ENCODE measurements at regions of chr22 and their contacts with region 1.

Region 1: DNA sequence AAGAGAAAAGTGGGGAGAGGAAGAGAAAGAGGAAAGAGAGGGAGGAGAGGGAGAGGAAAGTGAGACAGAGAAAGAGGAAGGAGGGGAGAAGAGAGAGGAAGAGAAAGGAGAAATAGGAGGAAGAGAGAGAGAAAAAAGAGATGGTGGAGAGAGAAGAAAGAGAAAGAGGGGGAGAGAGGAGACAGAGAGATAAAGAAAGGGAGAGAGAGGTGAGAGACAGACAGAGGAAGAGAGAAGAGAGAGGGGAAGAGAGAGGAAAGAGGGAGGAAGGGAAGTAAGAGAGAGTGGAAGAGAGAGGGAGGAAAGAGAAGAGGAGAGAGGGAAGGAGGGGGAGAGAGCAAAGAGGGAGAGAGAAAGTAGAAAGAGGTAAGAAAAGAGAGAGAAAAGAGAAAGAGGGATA is 9.4 kb upstream of the SEZ6L start:
- DNase-seq: no peak
- H3K4me3 ChIP-seq: no peak overlapping the region
- H3K27ac ChIP-seq: no peak overlapping the region
- H3K4me1 ChIP-seq: no peaks in the 10 kb centered on the region
- H3K27me3 ChIP-seq: peaks cover 96% of the 10 kb centered on the region
- CTCF ChIP-seq: no peak

Region 2: GRCh38 chr22:26215736-26216135 is 55.9 kb after region 1 on chr22:
- intact Hi-C with region 1: loop called (anchors 10 kb)
- DNase-seq: no peak
- H3K4me3 ChIP-seq: no peak overlapping the region
- H3K27ac ChIP-seq: no peak overlapping the region
- H3K4me1 ChIP-seq: no peaks in the 10 kb centered on the region
- H3K27me3 ChIP-seq: peaks cover 92% of the 10 kb centered on the region
- CTCF ChIP-seq: no peak

Region 3: GRCh38 chr22:26273011-26273675 is 113.3 kb after region 1 on chr22:
- intact Hi-C with region 1: no loop called
- DNase-seq: no peak
- H3K4me3 ChIP-seq: no peak overlapping the region
- H3K27ac ChIP-seq: no peak overlapping the region
- H3K4me1 ChIP-seq: no peaks in the 10 kb centered on the region
- H3K27me3 ChIP-seq: peaks cover 93% of the 10 kb centered on the region
- CTCF ChIP-seq: no peak

Measured in left ventricle myocardium inferior (tissue), 1 donor.